Endothelial cell of umbilical vein (primary cell): ENCODE measurements at regions of chr3 and their contacts with region 1.

Region 1: GRCh38 chr3:180433152-180433551 is 168.8 kb upstream of the TTC14 start:
- DNase-seq: peak; percentile 88
- H3K4me3 ChIP-seq: no peak overlapping the region
- H3K27ac ChIP-seq: peak overlapping the region; percentile 82
- H3K4me1 ChIP-seq: peaks cover 13% of the 10 kb centered on the region
- H3K27me3 ChIP-seq: no peaks in the 10 kb centered on the region
- CTCF ChIP-seq: no peak
- POLR2A ChIP-seq: no peak

Region 2: GRCh38 chr3:179768080-179768479 is 665.1 kb before region 1 on chr3:
- CTCF ChIA-PET with region 1: no interaction called
- POLR2A ChIA-PET with region 1: no interaction called
- dilution Hi-C with region 1: no loop called
- intact Hi-C with region 1: loop called (anchors 5 kb)
- DNase-seq: peak; percentile 43
- H3K4me3 ChIP-seq: no peak overlapping the region
- H3K27ac ChIP-seq: no peak overlapping the region
- H3K4me1 ChIP-seq: peaks cover 16% of the 10 kb centered on the region
- H3K27me3 ChIP-seq: no peaks in the 10 kb centered on the region
- CTCF ChIP-seq: peak; percentile 37 to 38
- POLR2A ChIP-seq: no peak